H1 (cell line): ENCODE measurements at regions of chr17 and their contacts with region 1.

Region 1: DNA sequence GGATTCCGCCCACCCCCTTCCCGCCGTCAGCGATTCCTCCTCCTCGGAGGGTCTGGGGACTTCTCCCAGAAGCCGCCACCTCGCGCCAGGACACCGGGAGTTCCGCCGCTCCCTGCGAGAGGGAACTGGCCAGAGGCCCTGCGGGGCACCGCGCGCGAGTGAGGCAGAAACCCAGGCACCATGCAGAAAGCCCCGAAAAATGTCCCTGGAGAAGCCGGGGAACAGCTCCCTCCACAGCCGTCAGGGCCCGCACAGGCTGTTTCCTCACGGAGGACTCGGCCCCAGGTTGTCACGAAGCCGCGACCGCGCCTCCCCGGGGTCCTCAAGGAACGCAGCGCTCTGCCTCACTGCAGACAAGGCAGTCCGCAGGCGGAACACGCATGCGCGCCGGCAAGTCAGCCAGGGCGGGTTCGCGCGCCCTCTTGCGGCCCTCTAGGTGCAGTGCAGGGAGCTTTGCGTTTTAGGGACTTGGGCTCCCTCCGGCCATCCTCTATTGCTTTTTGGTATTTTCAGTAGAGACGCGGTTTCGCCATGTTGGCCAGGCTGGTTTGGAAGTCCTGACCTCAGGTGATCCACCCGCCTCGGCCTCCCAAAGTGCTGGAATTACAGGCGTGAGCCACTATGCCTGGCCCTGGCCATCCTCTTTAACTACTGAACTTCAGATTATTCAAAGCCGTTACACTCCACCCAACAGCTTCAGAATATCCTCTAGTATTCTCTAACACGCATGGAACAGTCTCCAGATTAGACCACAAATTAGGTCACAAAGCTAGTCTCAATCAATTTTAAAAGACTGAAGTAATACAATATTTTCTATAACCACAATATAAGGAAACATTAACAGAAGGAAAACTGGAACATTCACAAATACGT is 20.3 kb upstream of the ZNF287 start:
- DNase-seq: peak; percentile 86 to 98
- H3K4me3 ChIP-seq: peak overlapping the region; percentile 41 to 78 (median 68)
- H3K27ac ChIP-seq: no peak overlapping the region
- H3K4me1 ChIP-seq: no peaks in the 10 kb centered on the region
- H3K27me3 ChIP-seq: peaks cover 2 to 15% (median 10%) of the 10 kb centered on the region in 4 experiments
- CTCF ChIP-seq: peak; percentile 96 to 97 (median 96)
- EP300 ChIP-seq: no peak
- POLR2A ChIP-seq: peak in 1 of 2 experiments; percentile 67; a peak in 2 of 3 replicates
- RAD21 ChIP-seq: peak; percentile 60 to 73

Region 2: GRCh38 chr17:16456742-16457316 is 132.5 kb before region 1 on chr17:
- CTCF ChIA-PET with region 1: interaction called, 15 read pairs
- POLR2A ChIA-PET with region 1: no interaction called
- DNase-seq: no peak
- H3K4me3 ChIP-seq: no peak overlapping the region
- H3K27ac ChIP-seq: no peak overlapping the region
- H3K4me1 ChIP-seq: peaks cover 6 to 16% (median 12%) of the 10 kb centered on the region in 4 experiments
- H3K27me3 ChIP-seq: no peaks in the 10 kb centered on the region
- CTCF ChIP-seq: peak; percentile 37 to 42 (median 37)
- EP300 ChIP-seq: no peak
- POLR2A ChIP-seq: no peak
- RAD21 ChIP-seq: peak; percentile 53 to 65

Region 3: DNA sequence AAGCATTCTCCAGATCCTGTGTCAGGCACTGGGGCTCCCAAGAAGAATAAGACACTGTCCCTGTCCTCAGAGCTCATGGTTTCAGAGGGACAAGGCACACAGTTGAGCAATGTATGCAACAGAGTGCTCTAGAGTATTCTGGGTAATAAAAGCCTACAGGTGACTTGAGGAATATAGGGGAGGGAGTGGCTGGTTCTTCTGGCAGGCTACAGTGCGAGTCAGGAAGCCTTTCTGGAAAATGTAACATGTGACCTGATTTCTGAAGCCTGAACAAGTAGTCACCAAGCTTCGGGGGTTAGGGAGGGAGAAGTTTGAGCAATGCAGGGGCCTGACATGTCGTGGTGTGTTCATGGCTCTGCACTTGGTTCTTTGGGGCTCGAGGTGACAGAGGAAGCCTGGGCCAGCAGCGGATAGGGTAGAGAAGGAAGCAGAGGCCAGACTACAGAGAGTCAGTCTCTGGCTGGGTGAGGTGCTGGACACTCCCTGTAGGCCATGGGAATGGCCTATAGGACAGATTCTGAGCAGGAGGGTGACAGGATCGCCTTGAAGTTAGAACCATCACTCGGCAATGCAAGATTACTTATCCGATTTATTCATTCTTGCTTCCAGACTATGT is 81.3 kb before region 1 on chr17:
- CTCF ChIA-PET with region 1: no interaction called
- POLR2A ChIA-PET with region 1: no interaction called
- DNase-seq: no peak
- H3K4me3 ChIP-seq: no peak overlapping the region
- H3K27ac ChIP-seq: no peak overlapping the region
- H3K4me1 ChIP-seq: peaks cover 4 to 12% (median 9%) of the 10 kb centered on the region in 4 experiments
- H3K27me3 ChIP-seq: no peaks in the 10 kb centered on the region; a peak in 2 of 7 replicates
- CTCF ChIP-seq: no peak
- EP300 ChIP-seq: no peak
- POLR2A ChIP-seq: no peak
- RAD21 ChIP-seq: no peak

Region 4: GRCh38 chr17:16537130-16537458 is 52.2 kb before region 1 on chr17:
- CTCF ChIA-PET with region 1: interaction called, 10 read pairs
- POLR2A ChIA-PET with region 1: no interaction called
- DNase-seq: no peak
- H3K4me3 ChIP-seq: no peak overlapping the region
- H3K27ac ChIP-seq: no peak overlapping the region
- H3K4me1 ChIP-seq: peaks cover 0 to 3% (median 0%) of the 10 kb centered on the region in 4 experiments; a peak in 2 of 7 replicates
- H3K27me3 ChIP-seq: no peaks in the 10 kb centered on the region
- CTCF ChIP-seq: no peak
- EP300 ChIP-seq: no peak
- POLR2A ChIP-seq: no peak
- RAD21 ChIP-seq: no peak

Region 5: GRCh38 chr17:16676676-16677268 is 87.4 kb after region 1 on chr17:
- CTCF ChIA-PET with region 1: no interaction called
- POLR2A ChIA-PET with region 1: no interaction called
- DNase-seq: no peak
- H3K4me3 ChIP-seq: no peak overlapping the region
- H3K27ac ChIP-seq: no peak overlapping the region
- H3K4me1 ChIP-seq: no peaks in the 10 kb centered on the region
- H3K27me3 ChIP-seq: no peaks in the 10 kb centered on the region
- CTCF ChIP-seq: no peak
- EP300 ChIP-seq: no peak
- POLR2A ChIP-seq: no peak
- RAD21 ChIP-seq: no peak